ENCODE measurements at regions of chr9 and their contacts with region 1.

Region 1: GRCh38 chr9:36479101-36479500 is 79.0 kb upstream of the RNF38 start:
- DNase-seq: no peak
- ATAC-seq: no peak
- H3K4me3 ChIP-seq: no peak overlapping the region
- H3K4me3 Mint-ChIP-seq: no peak overlapping the region
- H3K27ac ChIP-seq: no peak overlapping the region
- H3K27ac Mint-ChIP-seq: peak overlapping the region; percentile 17 to 65
- H3K4me1 ChIP-seq: peaks cover 4 to 6% of the 10 kb centered on the region in 2 experiments
- H3K4me1 Mint-ChIP-seq: peaks cover 36 to 41% (median 41%) of the 10 kb centered on the region in 3 donors
- H3K27me3 ChIP-seq: no peaks in the 10 kb centered on the region
- H3K27me3 Mint-ChIP-seq: no peaks in the 10 kb centered on the region

Region 2: GRCh38 chr9:36415822-36416515 is 63.1 kb before region 1 on chr9:
- CTCF ChIA-PET with region 1: interaction called in 1 of 2 experiments, 11 read pairs
- POLR2A ChIA-PET with region 1: no interaction called
- DNase-seq: no peak
- ATAC-seq: no peak
- H3K4me3 ChIP-seq: no peak overlapping the region
- H3K4me3 Mint-ChIP-seq: no peak overlapping the region
- H3K27ac ChIP-seq: no peak overlapping the region
- H3K27ac Mint-ChIP-seq: peak overlapping the region in 1 of 2 donors; percentile 61
- H3K4me1 ChIP-seq: no peaks in the 10 kb centered on the region
- H3K4me1 Mint-ChIP-seq: peaks cover 18 to 25% (median 21%) of the 10 kb centered on the region in 3 donors
- H3K27me3 ChIP-seq: no peaks in the 10 kb centered on the region
- H3K27me3 Mint-ChIP-seq: no peaks in the 10 kb centered on the region

Region 3: GRCh38 chr9:36426945-36427344 is 52.2 kb before region 1 on chr9:
- CTCF ChIA-PET with region 1: no interaction called
- POLR2A ChIA-PET with region 1: no interaction called
- DNase-seq: no peak
- ATAC-seq: no peak
- H3K4me3 ChIP-seq: no peak overlapping the region
- H3K4me3 Mint-ChIP-seq: no peak overlapping the region
- H3K27ac ChIP-seq: no peak overlapping the region
- H3K27ac Mint-ChIP-seq: peak overlapping the region in 1 of 2 donors; percentile 5
- H3K4me1 ChIP-seq: peaks cover 5 to 7% of the 10 kb centered on the region in 2 experiments
- H3K4me1 Mint-ChIP-seq: peaks cover 54 to 58% (median 54%) of the 10 kb centered on the region in 3 donors
- H3K27me3 ChIP-seq: no peaks in the 10 kb centered on the region
- H3K27me3 Mint-ChIP-seq: no peaks in the 10 kb centered on the region

Region 4: GRCh38 chr9:36551129-36551528 is 72.0 kb after region 1 on chr9:
- CTCF ChIA-PET with region 1: interaction called in 1 of 2 experiments, 5 read pairs
- POLR2A ChIA-PET with region 1: interaction called in 1 of 2 experiments, 10 read pairs
- DNase-seq: no peak
- ATAC-seq: no peak
- H3K4me3 ChIP-seq: no peak overlapping the region
- H3K4me3 Mint-ChIP-seq: no peak overlapping the region
- H3K27ac ChIP-seq: no peak overlapping the region
- H3K27ac Mint-ChIP-seq: no peak overlapping the region
- H3K4me1 ChIP-seq: peaks cover 0 to 2% of the 10 kb centered on the region in 2 experiments
- H3K4me1 Mint-ChIP-seq: peaks cover 0 to 2% (median 2%) of the 10 kb centered on the region in 3 donors
- H3K27me3 ChIP-seq: peaks cover 0 to 4% of the 10 kb centered on the region in 2 experiments
- H3K27me3 Mint-ChIP-seq: peaks cover 5 to 10% of the 10 kb centered on the region in 2 donors

Region 5: GRCh38 chr9:36597412-36598178 is 118.5 kb after region 1 on chr9:
- CTCF ChIA-PET with region 1: no interaction called
- POLR2A ChIA-PET with region 1: no interaction called
- DNase-seq: peak in 1 of 35 experiments; percentile 29
- ATAC-seq: no peak
- H3K4me3 ChIP-seq: no peak overlapping the region
- H3K4me3 Mint-ChIP-seq: no peak overlapping the region
- H3K27ac ChIP-seq: no peak overlapping the region
- H3K27ac Mint-ChIP-seq: no peak overlapping the region
- H3K4me1 ChIP-seq: no peaks in the 10 kb centered on the region
- H3K4me1 Mint-ChIP-seq: peaks cover 0 to 2% (median 0%) of the 10 kb centered on the region in 3 donors
- H3K27me3 ChIP-seq: no peaks in the 10 kb centered on the region
- H3K27me3 Mint-ChIP-seq: no peaks in the 10 kb centered on the region

Measured in T-cell (primary cell).